ENCODE measurements at regions of chr7 and their contacts with region 1.

Region 1: GRCh38 chr7:50369143-50370026 is 64.9 kb downstream of the IKZF1 start:
- H3K4me3 Mint-ChIP-seq: no peak overlapping the region
- H3K27ac Mint-ChIP-seq: no peak overlapping the region
- H3K4me1 Mint-ChIP-seq: peaks cover 36% of the 10 kb centered on the region
- H3K27me3 Mint-ChIP-seq: no peaks in the 10 kb centered on the region

Region 2: DNA sequence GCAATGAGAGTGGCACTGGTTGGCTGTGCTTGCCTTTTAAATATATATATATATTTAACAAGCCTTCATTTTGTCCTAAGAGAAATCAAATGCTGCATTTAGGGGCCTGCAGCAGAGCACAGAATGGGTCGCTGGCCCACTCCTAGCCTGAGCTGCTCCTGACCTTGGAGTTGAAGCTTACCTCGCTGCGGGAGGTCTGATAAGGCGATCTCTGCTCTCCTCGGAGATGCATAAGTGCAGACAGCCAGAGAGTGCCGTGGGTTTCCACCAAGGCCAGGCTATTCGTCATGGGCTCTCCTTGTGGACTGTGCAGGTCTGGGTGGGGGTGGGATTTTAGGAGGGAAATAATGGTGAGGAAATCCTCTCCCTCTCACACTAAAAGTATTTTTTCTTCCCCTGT is 164.4 kb before region 1 on chr7:
- intact Hi-C with region 1: loop called (anchors 1 kb)
- H3K4me3 Mint-ChIP-seq: no peak overlapping the region
- H3K27ac Mint-ChIP-seq: no peak overlapping the region
- H3K4me1 Mint-ChIP-seq: peaks cover 54% of the 10 kb centered on the region
- H3K27me3 Mint-ChIP-seq: no peaks in the 10 kb centered on the region

Region 3: DNA sequence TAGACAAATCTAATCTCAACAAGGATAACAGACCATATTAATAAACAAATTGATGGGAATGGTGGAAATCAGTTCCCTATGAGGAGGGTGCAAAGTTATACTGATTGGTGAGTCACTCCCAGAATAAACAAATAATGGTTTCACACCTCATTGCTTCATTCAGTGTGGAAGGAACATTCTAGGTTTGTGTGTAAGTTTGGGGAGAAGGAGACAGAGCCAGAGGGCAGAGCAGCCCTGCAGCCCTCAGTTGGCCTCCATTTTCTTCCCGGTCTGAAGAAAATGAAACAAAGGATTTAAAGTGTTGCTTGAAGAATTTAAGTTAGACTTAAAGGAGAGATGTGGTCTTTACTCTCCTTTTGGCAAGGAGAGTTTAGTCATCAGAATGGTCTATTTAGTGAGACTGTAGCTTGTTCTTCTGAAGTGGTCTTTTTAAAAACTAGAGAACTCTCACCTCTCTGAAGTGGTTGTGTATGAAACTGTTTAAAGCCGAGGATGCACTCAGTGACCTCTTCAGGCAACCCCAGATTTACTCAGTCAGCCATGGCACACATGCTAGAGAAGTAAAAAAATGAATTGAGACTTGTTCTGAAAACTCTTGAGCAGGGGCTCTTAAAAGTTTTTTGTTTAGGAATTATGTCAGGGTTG is 37.7 kb before region 1 on chr7:
- intact Hi-C with region 1: loop called (anchors 5 kb)
- H3K4me3 Mint-ChIP-seq: no peak overlapping the region
- H3K27ac Mint-ChIP-seq: peak overlapping the region; percentile 19
- H3K4me1 Mint-ChIP-seq: peaks cover 42% of the 10 kb centered on the region
- H3K27me3 Mint-ChIP-seq: no peaks in the 10 kb centered on the region